ENCODE measurements at regions of chr7 and their contacts with region 1.

Region 1: DNA sequence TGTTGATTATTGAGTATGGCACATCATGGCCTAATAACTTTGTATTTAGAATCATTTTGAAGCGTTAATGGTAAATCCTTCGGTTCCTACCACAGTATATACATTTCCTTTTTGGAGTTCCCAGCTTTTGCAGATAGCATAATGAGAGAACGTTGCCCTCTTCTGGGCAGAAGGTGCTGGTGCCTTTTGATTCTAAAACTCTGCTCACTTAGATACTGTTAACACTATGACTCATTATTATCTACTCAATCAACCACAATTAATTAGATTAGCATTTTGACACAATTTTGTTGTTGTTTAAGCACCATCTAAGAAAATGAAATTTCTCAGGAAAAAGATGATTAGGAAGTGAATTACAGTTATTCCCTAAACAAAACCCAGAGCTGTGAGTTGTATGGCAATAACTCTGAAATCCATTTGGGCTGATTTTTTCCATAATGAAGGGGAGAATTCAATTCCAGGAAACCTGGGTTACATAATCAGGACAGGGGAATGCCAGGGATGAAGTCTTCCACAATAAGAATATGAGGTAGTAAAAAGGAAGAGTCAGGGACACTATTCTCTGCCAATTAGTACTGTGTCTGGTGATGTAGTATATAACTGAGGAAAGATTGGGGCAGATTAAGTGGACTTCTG is 11.5 kb upstream of the DLD start:
- DNase-seq: peak; percentile 56 to 63
- ATAC-seq: peak; percentile 75 to 87; a peak in 5 of 6 replicates
- H3K4me3 ChIP-seq: no peak overlapping the region
- H3K27ac ChIP-seq: no peak overlapping the region
- H3K4me1 ChIP-seq: no peaks in the 10 kb centered on the region
- CTCF ChIP-seq: peak; percentile 83
- EP300 ChIP-seq: no peak
- POLR2A ChIP-seq: no peak
- RAD21 ChIP-seq: peak; percentile 75 to 81

Region 2: DNA sequence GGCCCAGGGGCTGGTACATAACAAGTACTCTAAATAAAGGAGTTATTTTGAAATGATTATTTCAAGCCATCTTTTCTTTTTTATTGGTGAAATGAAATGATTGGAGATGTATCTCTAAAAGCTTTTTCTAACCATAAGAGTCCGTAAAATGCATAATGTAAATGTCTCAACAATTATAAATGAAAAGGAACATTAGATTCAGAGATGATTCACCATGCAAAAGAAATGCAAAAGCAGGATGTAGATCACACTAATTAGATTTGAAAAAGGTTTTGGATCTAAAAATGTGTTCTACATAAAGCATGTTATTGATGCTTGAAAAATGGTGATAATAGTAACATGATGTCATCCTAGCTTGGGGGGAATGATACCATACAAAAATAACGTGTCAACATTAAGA is 203.3 kb before region 1 on chr7:
- CTCF ChIA-PET with region 1: no interaction called
- POLR2A ChIA-PET with region 1: no interaction called
- DNase-seq: no peak
- ATAC-seq: no peak
- H3K4me3 ChIP-seq: no peak overlapping the region
- H3K27ac ChIP-seq: no peak overlapping the region
- H3K4me1 ChIP-seq: no peaks in the 10 kb centered on the region
- CTCF ChIP-seq: no peak
- EP300 ChIP-seq: no peak
- POLR2A ChIP-seq: no peak
- RAD21 ChIP-seq: no peak

Region 3: DNA sequence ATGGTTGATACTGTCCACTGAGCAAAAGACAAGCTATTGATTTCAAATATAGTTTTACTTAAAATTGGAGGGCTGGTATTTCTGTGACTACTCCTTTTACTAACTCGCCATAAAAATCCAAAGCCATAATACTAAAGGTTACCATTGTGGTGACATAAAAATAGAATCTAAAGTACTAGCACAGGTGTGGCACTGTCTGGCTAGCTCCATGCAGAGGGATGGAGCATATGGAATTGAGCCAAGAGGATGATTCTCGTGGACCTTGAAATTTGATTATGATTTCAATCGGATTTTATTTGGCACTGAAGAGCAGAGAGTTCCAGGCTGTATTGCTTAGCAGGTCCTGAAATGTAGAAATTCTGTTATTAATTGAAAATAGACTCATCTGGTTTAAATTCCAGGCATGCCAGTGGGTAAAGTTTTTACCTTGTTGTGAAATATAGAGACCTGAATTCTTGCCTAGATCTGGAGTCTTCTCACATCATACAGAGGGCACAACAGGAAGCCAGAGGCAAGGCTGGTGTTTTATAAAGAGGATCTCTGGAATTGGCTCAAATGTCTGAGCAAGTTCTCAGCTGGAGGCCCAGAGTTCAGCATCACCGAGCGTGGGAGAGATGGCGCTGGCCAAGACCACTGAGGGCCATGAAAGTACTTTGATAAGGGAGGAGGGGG is 18.4 kb before region 1 on chr7:
- CTCF ChIA-PET with region 1: interaction called, 14 read pairs
- POLR2A ChIA-PET with region 1: no interaction called
- DNase-seq: no peak
- ATAC-seq: no peak
- H3K4me3 ChIP-seq: no peak overlapping the region
- H3K27ac ChIP-seq: no peak overlapping the region
- H3K4me1 ChIP-seq: 0 out of 3 replicates have a peak, but pooled peaks cover 2% of the 10 kb centered on the region
- CTCF ChIP-seq: no peak
- EP300 ChIP-seq: 0 out of 5 replicates have a peak, but pooled peaks of 1 of the 2 experiments have one; percentile 17
- POLR2A ChIP-seq: no peak
- RAD21 ChIP-seq: no peak

Region 4: GRCh38 chr7:107890962-107891635 is 11.6 kb after region 1 on chr7 and contains the start of gene DLD:
- CTCF ChIA-PET with region 1: interaction called, 23 read pairs
- POLR2A ChIA-PET with region 1: no interaction called
- DNase-seq: peak; percentile 93
- ATAC-seq: peak; percentile 99
- H3K4me3 ChIP-seq: peak within 1 kb of the TSS; percentile 54
- H3K27ac ChIP-seq: peak within 1 kb of the TSS; percentile 84 to 88
- H3K4me1 ChIP-seq: peaks cover 22% of the 10 kb centered on the region
- CTCF ChIP-seq: no peak
- EP300 ChIP-seq: no peak
- POLR2A ChIP-seq: peak; percentile 83
- RAD21 ChIP-seq: no peak; a peak in 1 of 5 replicates
- polyA plus RNA-seq, gene DLD: 168 and 179 TPM in 2 replicates

Region 5: GRCh38 chr7:107948645-107949497 is 69.4 kb after region 1 on chr7:
- CTCF ChIA-PET with region 1: no interaction called
- POLR2A ChIA-PET with region 1: no interaction called
- DNase-seq: peak; percentile 69 to 76
- ATAC-seq: peak; percentile 68 to 73
- H3K4me3 ChIP-seq: peak overlapping the region; percentile 17; the same call in 2 of the 3 replicates
- H3K27ac ChIP-seq: peak overlapping the region; percentile 68 to 86
- H3K4me1 ChIP-seq: peaks cover 77% of the 10 kb centered on the region
- CTCF ChIP-seq: no peak
- EP300 ChIP-seq: peak; percentile 31 to 51; a peak in 3 of 5 replicates
- POLR2A ChIP-seq: no peak
- RAD21 ChIP-seq: no peak